Common myeloid progenitor, CD34-positive (primary cell): ENCODE measurements at regions of chr7 and their contacts with region 1.

Region 1: DNA sequence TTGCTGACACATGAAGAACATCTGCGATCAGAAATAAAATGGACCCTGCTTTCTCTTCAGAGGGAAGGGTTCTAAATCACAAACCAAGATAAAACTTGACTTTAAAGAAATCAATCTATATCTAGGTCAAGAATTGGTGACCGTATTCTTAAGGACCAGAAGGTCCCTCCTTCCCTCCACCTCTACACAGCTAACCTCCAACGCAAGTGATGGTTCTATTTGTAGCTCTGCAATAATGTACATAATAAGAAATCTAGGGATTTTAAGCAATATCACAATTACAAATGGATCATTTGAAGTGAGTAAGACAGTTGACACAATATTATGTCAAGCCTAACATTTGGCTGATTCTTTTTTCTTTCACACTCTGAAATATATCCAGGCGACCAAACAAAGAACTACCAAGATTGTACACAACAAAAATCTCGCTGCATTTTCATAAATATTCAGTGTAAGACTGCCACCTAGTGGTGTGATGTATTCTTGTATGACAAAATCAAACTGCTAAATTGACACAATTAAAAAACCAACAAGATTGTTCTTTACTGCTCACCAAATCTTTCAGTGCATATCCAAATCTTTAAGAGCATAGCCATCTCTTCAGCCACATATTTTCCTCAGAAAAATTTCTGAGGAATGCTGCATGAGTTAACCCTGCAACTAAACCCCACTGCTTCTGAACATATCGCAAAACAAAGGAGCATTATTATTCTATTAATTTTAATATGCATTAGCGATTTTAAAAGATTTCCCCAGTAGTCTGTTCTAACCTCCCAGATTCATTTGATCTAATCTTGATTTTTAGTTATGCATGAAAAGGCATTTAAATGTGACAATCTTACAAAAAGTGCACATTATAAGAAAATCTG is 44.5 kb downstream of the ICA1 start:
- DNase-seq: peak; percentile 72 to 91 (median 87)
- H3K4me3 ChIP-seq: no peak overlapping the region
- H3K27ac ChIP-seq: no peak overlapping the region
- H3K4me1 ChIP-seq: no peaks in the 10 kb centered on the region
- H3K27me3 ChIP-seq: no peaks in the 10 kb centered on the region

Region 2: GRCh38 chr7:8134089-8134733 is 83.2 kb before region 1 on chr7:
- CTCF ChIA-PET with region 1: no interaction called
- POLR2A ChIA-PET with region 1: no interaction called
- DNase-seq: no peak
- H3K4me3 ChIP-seq: no peak overlapping the region
- H3K27ac ChIP-seq: no peak overlapping the region
- H3K4me1 ChIP-seq: peaks cover 0 to 16% (median 7%) of the 10 kb centered on the region in 4 experiments
- H3K27me3 ChIP-seq: no peaks in the 10 kb centered on the region

Region 3: GRCh38 chr7:8149222-8149621 is 68.2 kb before region 1 on chr7:
- CTCF ChIA-PET with region 1: no interaction called
- POLR2A ChIA-PET with region 1: no interaction called
- DNase-seq: peak; percentile 38 to 77 (median 69)
- H3K4me3 ChIP-seq: peak overlapping the region in 3 of 7 experiments; percentile 0 to 54 (median 45)
- H3K27ac ChIP-seq: no peak overlapping the region
- H3K4me1 ChIP-seq: peaks cover 21 to 31% (median 25%) of the 10 kb centered on the region in 4 experiments
- H3K27me3 ChIP-seq: no peaks in the 10 kb centered on the region

Region 4: GRCh38 chr7:8232999-8233847 is 15.8 kb after region 1 on chr7:
- CTCF ChIA-PET with region 1: interaction called, 10 read pairs
- POLR2A ChIA-PET with region 1: no interaction called
- DNase-seq: peak in 2 of 3 donors; percentile 26 to 58
- H3K4me3 ChIP-seq: no peak overlapping the region
- H3K27ac ChIP-seq: peak overlapping the region in 1 of 2 experiments; percentile 44
- H3K4me1 ChIP-seq: no peaks in the 10 kb centered on the region
- H3K27me3 ChIP-seq: no peaks in the 10 kb centered on the region